Breast epithelium (tissue), 4 donors: ENCODE measurements at regions of chr2 and their contacts with region 1.

Region 1: GRCh38 chr2:140108706-140109475 is 1328.7 kb upstream of the NXPH2 start:
- DNase-seq: no peak
- H3K4me3 ChIP-seq: no peak overlapping the region
- H3K27ac ChIP-seq: no peak overlapping the region
- H3K4me1 ChIP-seq: no peaks in the 10 kb centered on the region
- H3K27me3 ChIP-seq: no peaks in the 10 kb centered on the region
- CTCF ChIP-seq: no peak
- POLR2A ChIP-seq: no peak

Region 2: GRCh38 chr2:138974651-138975050 is 1134.2 kb before region 1 on chr2:
- intact Hi-C with region 1: no loop called
- DNase-seq: no peak
- H3K4me3 ChIP-seq: no peak overlapping the region
- H3K27ac ChIP-seq: no peak overlapping the region
- H3K4me1 ChIP-seq: no peaks in the 10 kb centered on the region
- H3K27me3 ChIP-seq: no peaks in the 10 kb centered on the region
- CTCF ChIP-seq: no peak
- POLR2A ChIP-seq: no peak

Region 3: GRCh38 chr2:142065700-142066099 is 1956.8 kb after region 1 on chr2:
- intact Hi-C with region 1: loop called (anchors 10 kb)
- DNase-seq: no peak
- H3K4me3 ChIP-seq: no peak overlapping the region
- H3K27ac ChIP-seq: no peak overlapping the region
- H3K4me1 ChIP-seq: no peaks in the 10 kb centered on the region
- H3K27me3 ChIP-seq: no peaks in the 10 kb centered on the region
- CTCF ChIP-seq: no peak
- POLR2A ChIP-seq: no peak